Caco-2 (cell line): ENCODE measurements at regions of chrX and their contacts with region 1.

Region 1: GRCh38 chrX:22081475-22082092 is 49.5 kb downstream of the PHEX start:
- DNase-seq: peak; percentile 41 to 51
- H3K4me3 ChIP-seq: no peak overlapping the region
- H3K4me3 Mint-ChIP-seq: no peak overlapping the region
- H3K27ac Mint-ChIP-seq: no peak overlapping the region
- H3K4me1 ChIP-seq: no peaks in the 10 kb centered on the region
- H3K4me1 Mint-ChIP-seq: peaks cover 7% of the 10 kb centered on the region
- H3K27me3 ChIP-seq: no peaks in the 10 kb centered on the region
- H3K27me3 Mint-ChIP-seq: no peaks in the 10 kb centered on the region
- CTCF ChIP-seq: peak; percentile 42 to 63

Region 2: GRCh38 chrX:21770631-21771321 is 310.8 kb before region 1 on chrX:
- CTCF ChIA-PET with region 1: no interaction called
- POLR2A ChIA-PET with region 1: no interaction called
- intact Hi-C with region 1: no loop called
- DNase-seq: peak in 1 of 2 experiments; percentile 0
- H3K4me3 ChIP-seq: no peak overlapping the region
- H3K4me3 Mint-ChIP-seq: no peak overlapping the region
- H3K27ac Mint-ChIP-seq: no peak overlapping the region
- H3K4me1 ChIP-seq: no peaks in the 10 kb centered on the region
- H3K4me1 Mint-ChIP-seq: no peaks in the 10 kb centered on the region
- H3K27me3 ChIP-seq: no peaks in the 10 kb centered on the region
- H3K27me3 Mint-ChIP-seq: no peaks in the 10 kb centered on the region
- CTCF ChIP-seq: no peak

Region 3: DNA sequence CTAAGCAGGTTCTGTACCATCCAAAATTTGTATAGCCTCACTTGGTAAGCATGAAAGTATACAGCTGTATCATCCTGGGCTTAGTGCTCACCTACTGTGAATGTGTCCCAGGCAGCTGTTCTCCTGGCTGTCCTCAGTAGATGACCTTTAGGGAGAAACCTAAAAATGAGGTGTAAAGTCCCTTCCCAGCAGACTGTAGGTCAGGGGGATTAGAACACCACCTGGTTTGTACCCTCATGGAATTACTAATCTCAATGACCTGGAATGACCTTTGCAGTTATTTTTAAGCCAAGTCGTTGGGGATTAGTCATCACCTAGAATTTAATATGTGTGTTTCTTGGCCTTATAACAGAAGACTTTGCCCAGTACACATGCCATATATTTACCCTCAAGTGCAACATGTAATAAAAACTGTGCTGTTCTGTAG is 281.2 kb before region 1 on chrX:
- CTCF ChIA-PET with region 1: no interaction called
- POLR2A ChIA-PET with region 1: no interaction called
- intact Hi-C with region 1: no loop called
- DNase-seq: no peak
- H3K4me3 ChIP-seq: no peak overlapping the region
- H3K4me3 Mint-ChIP-seq: no peak overlapping the region
- H3K27ac Mint-ChIP-seq: no peak overlapping the region
- H3K4me1 ChIP-seq: peaks cover 20% of the 10 kb centered on the region; the same call in 1 of the 2 replicates
- H3K4me1 Mint-ChIP-seq: no peaks in the 10 kb centered on the region
- H3K27me3 ChIP-seq: no peaks in the 10 kb centered on the region
- H3K27me3 Mint-ChIP-seq: no peaks in the 10 kb centered on the region
- CTCF ChIP-seq: no peak

Region 4: GRCh38 chrX:22192417-22193060 is 111.0 kb after region 1 on chrX:
- CTCF ChIA-PET with region 1: no interaction called
- POLR2A ChIA-PET with region 1: no interaction called
- intact Hi-C with region 1: loop called (anchors 1 kb)
- DNase-seq: peak; percentile 59 to 65
- H3K4me3 ChIP-seq: no peak overlapping the region
- H3K4me3 Mint-ChIP-seq: peak overlapping the region; percentile 53
- H3K27ac Mint-ChIP-seq: no peak overlapping the region
- H3K4me1 ChIP-seq: no peaks in the 10 kb centered on the region; the same call in 1 of the 2 replicates
- H3K4me1 Mint-ChIP-seq: peaks cover 7% of the 10 kb centered on the region
- H3K27me3 ChIP-seq: no peaks in the 10 kb centered on the region
- H3K27me3 Mint-ChIP-seq: no peaks in the 10 kb centered on the region
- CTCF ChIP-seq: peak; percentile 45 to 73

Region 5: GRCh38 chrX:22220941-22221340 is 139.4 kb after region 1 on chrX:
- CTCF ChIA-PET with region 1: no interaction called
- POLR2A ChIA-PET with region 1: no interaction called
- intact Hi-C with region 1: no loop called
- DNase-seq: no peak
- H3K4me3 ChIP-seq: no peak overlapping the region
- H3K4me3 Mint-ChIP-seq: no peak overlapping the region
- H3K27ac Mint-ChIP-seq: no peak overlapping the region
- H3K4me1 ChIP-seq: no peaks in the 10 kb centered on the region
- H3K4me1 Mint-ChIP-seq: no peaks in the 10 kb centered on the region
- H3K27me3 ChIP-seq: no peaks in the 10 kb centered on the region
- H3K27me3 Mint-ChIP-seq: no peaks in the 10 kb centered on the region
- CTCF ChIP-seq: no peak

Region 6: DNA sequence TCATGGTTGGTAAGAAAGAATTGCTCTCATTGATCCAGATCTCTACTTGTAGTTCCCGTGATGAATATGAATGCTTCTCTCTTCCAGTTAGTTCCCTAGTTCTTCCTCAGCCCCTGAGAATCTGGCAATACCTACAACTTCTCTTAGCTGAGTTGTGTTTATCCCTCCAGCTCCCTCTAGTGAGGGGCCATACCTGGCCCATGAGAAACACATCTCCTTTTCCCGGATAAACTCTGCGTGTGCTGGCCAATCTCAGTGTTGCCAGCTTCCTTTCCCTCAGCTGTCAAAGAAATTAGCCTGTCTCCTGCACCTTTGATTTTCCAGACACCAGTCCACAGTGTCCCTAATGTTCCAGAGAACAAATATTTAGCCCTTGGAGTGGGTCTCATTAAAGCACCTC is 196.8 kb after region 1 on chrX:
- CTCF ChIA-PET with region 1: no interaction called
- POLR2A ChIA-PET with region 1: no interaction called
- intact Hi-C with region 1: loop called (anchors 5 kb)
- DNase-seq: peak in 1 of 2 experiments; percentile 5
- H3K4me3 ChIP-seq: no peak overlapping the region
- H3K4me3 Mint-ChIP-seq: no peak overlapping the region
- H3K27ac Mint-ChIP-seq: no peak overlapping the region
- H3K4me1 ChIP-seq: no peaks in the 10 kb centered on the region
- H3K4me1 Mint-ChIP-seq: no peaks in the 10 kb centered on the region
- H3K27me3 ChIP-seq: no peaks in the 10 kb centered on the region
- H3K27me3 Mint-ChIP-seq: peaks cover 9% of the 10 kb centered on the region
- CTCF ChIP-seq: peak; percentile 10 to 54